ENCODE measurements at regions of chr9 and their contacts with region 1.

Region 1: GRCh38 chr9:76905791-76906650 is at the start of gene PRUNE2:
- DNase-seq: peak; percentile 27 to 84 (median 62)
- H3K4me3 ChIP-seq: peak within 1 kb of the TSS; percentile 41 to 89 (median 69)
- H3K27ac ChIP-seq: peak within 1 kb of the TSS; percentile 20 to 98 (median 86)
- H3K27me3 ChIP-seq: peaks cover 0 to 5% (median 0%) of the 10 kb centered on the region in 45 donors
- CTCF ChIP-seq: peak in 19 of 56 donors; percentile 6 to 33 (median 19)
- total RNA-seq, gene PRUNE2: 85.1 to 471 (median 248) TPM

Region 2: DNA sequence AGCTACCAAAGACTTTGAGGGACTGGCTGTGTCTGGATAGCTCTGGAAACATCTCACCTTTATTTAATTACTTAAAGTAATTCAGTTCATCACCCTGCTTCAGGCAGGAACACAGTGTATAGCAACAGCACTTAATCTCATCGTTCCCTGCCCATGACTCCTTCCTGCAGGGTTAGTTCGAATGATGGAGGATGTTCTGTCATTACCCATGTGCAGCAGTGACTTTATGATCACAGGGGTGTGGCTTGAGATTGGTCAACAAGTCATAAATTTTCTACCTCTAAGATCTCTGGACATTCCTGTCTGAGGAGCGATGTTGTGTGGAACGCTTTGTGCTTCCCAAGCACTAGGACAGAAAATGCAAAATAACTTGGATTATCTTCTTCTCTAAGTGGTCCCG is 37.0 kb after region 1 on chr9:
- intact Hi-C with region 1: loop called in 1 of 2 experiments (anchors 5 kb)
- DNase-seq: no peak
- H3K4me3 ChIP-seq: no peak overlapping the region
- H3K27ac ChIP-seq: peak overlapping the region in 16 of 59 donors; percentile 31 to 87 (median 73)
- H3K27me3 ChIP-seq: peaks cover 0 to 2% (median 0%) of the 10 kb centered on the region in 45 donors
- CTCF ChIP-seq: no peak

Region 3: DNA sequence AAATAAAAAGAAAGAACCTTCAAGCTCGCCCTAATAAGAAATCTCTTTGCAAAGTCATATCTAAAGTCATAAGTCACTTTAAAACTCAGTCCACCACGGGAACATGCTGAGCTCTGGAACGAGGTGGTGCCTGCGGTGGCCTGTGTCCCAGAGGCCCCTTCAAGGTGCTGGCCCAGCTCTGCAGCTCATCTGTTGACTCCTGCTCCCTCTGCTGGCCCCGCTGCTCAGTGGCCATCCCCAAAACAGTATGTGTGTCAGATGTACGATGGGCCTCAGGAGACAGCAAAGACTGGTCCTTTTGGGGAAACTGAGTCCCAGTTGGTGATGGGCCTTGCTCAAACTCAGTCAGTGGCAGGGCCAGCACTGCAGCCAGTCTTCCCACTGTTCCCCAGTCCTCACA is 90.7 kb after region 1 on chr9:
- intact Hi-C with region 1: no loop called
- DNase-seq: peak in 8 of 10 donors; percentile 40 to 65 (median 55)
- H3K4me3 ChIP-seq: no peak overlapping the region
- H3K27ac ChIP-seq: no peak overlapping the region
- H3K27me3 ChIP-seq: no peaks in the 10 kb centered on the region
- CTCF ChIP-seq: peak in 55 of 56 donors; percentile 20 to 74 (median 54)